CD14-positive monocyte (primary cell): ENCODE measurements at regions of chr3 and their contacts with region 1.

Region 1: GRCh38 chr3:36843065-36844051 is 79.0 kb upstream of the DCLK3 start:
- DNase-seq: no peak
- H3K4me3 ChIP-seq: no peak overlapping the region
- H3K4me3 Mint-ChIP-seq: no peak overlapping the region
- H3K27ac ChIP-seq: no peak overlapping the region
- H3K27ac Mint-ChIP-seq: no peak overlapping the region
- H3K4me1 ChIP-seq: no peaks in the 10 kb centered on the region
- H3K4me1 Mint-ChIP-seq: no peaks in the 10 kb centered on the region
- H3K27me3 ChIP-seq: no peaks in the 10 kb centered on the region
- H3K27me3 Mint-ChIP-seq: no peaks in the 10 kb centered on the region
- CTCF ChIP-seq: peak; percentile 39

Region 2: DNA sequence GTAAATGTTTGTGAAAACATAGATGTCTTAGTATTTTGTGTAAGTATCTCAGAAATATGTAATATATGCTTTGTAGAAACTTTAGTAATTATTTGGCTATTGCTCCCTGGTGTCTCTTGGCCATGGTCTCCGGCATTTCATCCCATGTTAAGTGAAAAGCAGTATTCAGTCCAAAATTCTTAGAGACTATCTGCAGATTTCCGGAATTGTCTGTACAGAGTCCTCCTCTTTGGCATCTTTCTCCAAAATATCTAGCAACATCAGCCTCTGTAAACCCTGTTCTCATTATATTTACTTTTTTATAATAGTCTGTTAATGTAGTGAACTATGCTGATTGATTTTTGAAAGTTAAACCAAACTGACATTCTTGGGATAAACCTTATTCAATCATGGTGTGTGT is 851.3 kb before region 1 on chr3:
- intact Hi-C with region 1: no loop called
- DNase-seq: no peak
- H3K4me3 ChIP-seq: no peak overlapping the region
- H3K4me3 Mint-ChIP-seq: no peak overlapping the region
- H3K27ac ChIP-seq: no peak overlapping the region
- H3K27ac Mint-ChIP-seq: no peak overlapping the region
- H3K4me1 ChIP-seq: no peaks in the 10 kb centered on the region
- H3K4me1 Mint-ChIP-seq: no peaks in the 10 kb centered on the region
- H3K27me3 ChIP-seq: no peaks in the 10 kb centered on the region
- H3K27me3 Mint-ChIP-seq: peaks cover 0 to 2% (median 0%) of the 10 kb centered on the region in 3 donors
- CTCF ChIP-seq: no peak

Region 3: DNA sequence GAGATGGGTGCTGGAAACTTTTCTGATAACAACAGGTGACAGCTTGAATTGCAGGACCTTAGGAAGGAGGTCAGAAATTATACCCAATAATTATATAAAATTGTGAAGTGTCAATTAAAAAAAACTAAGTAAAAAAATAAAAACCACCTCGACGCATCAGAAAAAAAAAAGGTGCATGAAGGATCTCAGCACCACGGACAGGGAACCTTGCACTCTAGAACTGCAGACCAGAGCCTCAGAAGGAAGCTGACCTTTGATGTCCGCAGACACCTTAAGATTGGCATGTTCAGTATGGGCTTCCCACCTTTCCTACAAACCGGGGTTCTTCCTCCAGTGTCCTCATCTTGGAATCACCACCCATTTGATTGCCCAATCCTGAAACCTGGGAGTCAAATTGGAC is 1911.8 kb after region 1 on chr3:
- intact Hi-C with region 1: loop called in 1 of 2 experiments (anchors 10 kb)
- DNase-seq: no peak
- H3K4me3 ChIP-seq: no peak overlapping the region
- H3K4me3 Mint-ChIP-seq: no peak overlapping the region
- H3K27ac ChIP-seq: no peak overlapping the region
- H3K27ac Mint-ChIP-seq: no peak overlapping the region
- H3K4me1 ChIP-seq: no peaks in the 10 kb centered on the region
- H3K4me1 Mint-ChIP-seq: no peaks in the 10 kb centered on the region
- H3K27me3 ChIP-seq: no peaks in the 10 kb centered on the region
- H3K27me3 Mint-ChIP-seq: peaks cover 1 to 5% (median 3%) of the 10 kb centered on the region in 3 donors
- CTCF ChIP-seq: no peak